PC-3 (cell line): ENCODE measurements at regions of chr5 and their contacts with region 1.

Region 1: GRCh38 chr5:116947691-116948528 is 373.3 kb upstream of the SEMA6A start:
- DNase-seq: peak; percentile 61
- ATAC-seq: no peak; the same call in 1 of the 2 replicates
- H3K4me3 ChIP-seq: no peak overlapping the region
- H3K27ac ChIP-seq: no peak overlapping the region
- H3K4me1 ChIP-seq: no peaks in the 10 kb centered on the region
- H3K27me3 ChIP-seq: no peaks in the 10 kb centered on the region
- CTCF ChIP-seq: peak; percentile 61

Region 2: GRCh38 chr5:116574367-116575325 is 373.3 kb before region 1 on chr5 and contains the start of gene SEMA6A:
- CTCF ChIA-PET with region 1: no interaction called
- POLR2A ChIA-PET with region 1: no interaction called
- intact Hi-C with region 1: loop called (anchors 2 kb)
- DNase-seq: peak; percentile 77
- ATAC-seq: peak; percentile 81
- H3K4me3 ChIP-seq: peak within 1 kb of the TSS; percentile 68
- H3K27ac ChIP-seq: no peak within 1 kb of the TSS
- H3K4me1 ChIP-seq: peaks cover 11% of the 10 kb centered on the region; the same call in 1 of the 2 replicates
- H3K27me3 ChIP-seq: peaks cover 61% of the 10 kb centered on the region
- CTCF ChIP-seq: no peak
- total RNA-seq, gene SEMA6A: not detected in 2 replicates

Region 3: DNA sequence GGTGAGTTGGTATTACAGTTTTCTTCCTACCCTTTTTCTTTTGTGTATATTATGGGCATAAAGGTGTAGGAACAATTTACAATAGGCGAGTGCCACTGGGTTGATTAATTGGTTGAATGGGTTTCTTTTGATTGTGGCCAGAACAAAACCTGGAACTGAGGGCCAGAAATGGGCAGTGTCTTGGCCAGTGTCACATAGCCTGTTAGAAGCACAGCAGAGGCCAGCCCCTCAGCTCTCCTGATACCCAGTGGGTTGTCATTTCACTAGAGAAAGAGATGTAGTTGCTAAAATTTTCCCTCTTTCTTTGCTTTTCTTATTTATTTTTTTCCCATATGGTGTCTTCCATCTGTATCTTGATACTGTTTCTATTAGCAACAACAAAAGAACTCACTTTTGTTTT is 334.5 kb before region 1 on chr5:
- CTCF ChIA-PET with region 1: no interaction called
- POLR2A ChIA-PET with region 1: no interaction called
- intact Hi-C with region 1: no loop called
- DNase-seq: no peak
- ATAC-seq: no peak
- H3K4me3 ChIP-seq: no peak overlapping the region
- H3K27ac ChIP-seq: no peak overlapping the region
- H3K4me1 ChIP-seq: no peaks in the 10 kb centered on the region
- H3K27me3 ChIP-seq: no peaks in the 10 kb centered on the region
- CTCF ChIP-seq: no peak